ENCODE measurements at regions of chr17 and their contacts with region 1.

Region 1: DNA sequence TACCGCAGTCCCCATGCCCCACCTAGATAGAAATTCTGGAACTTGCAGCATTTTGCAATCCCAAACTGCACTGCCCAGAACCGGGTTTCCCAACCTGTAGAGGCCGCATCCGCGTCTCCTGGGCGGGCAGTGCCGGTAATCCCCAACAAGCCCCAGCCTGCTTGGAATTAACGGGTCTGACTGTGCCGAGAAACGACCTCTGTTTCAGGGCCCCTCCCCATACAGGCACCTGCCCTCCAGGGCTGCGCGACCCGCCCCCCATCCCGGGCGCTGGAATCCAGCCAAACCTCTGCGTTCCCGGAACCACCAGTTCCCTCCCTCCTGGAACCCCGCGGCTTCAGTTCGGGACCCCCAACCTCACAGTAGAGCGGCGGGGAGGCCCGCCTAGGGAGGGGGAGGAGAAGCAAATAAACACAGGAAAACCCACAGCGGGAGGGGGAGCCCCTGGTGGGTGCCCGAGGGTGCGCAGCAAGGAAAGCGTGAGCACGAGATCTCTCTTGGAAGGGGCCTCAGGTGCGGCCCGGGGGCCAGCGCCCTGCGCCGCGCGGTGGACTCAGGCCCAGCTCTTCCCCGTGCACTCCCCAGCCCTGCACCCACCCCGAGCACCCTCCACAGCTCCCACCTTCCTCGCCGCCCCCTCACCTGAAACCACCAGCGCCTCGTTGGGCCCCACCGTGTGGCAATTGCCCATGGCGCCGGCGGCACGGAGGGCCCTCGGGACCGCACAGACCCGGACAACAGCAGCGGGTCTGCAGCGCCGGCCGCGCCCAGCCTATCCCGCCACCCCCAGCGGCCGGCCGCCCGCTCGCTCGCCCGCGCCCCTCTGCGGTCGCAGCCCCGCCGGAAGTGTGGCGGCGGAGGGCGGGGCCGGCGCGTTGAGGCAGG is at the start of gene FLOT2:
- DNase-seq: peak; percentile 36 to 55
- ATAC-seq: peak; percentile 68 to 82
- H3K4me3 ChIP-seq: peak within 1 kb of the TSS; percentile 70
- H3K27ac ChIP-seq: peak within 1 kb of the TSS; percentile 87 to 97
- H3K4me1 ChIP-seq: peaks cover 23% of the 10 kb centered on the region
- CTCF ChIP-seq: peak; percentile 38; the same call in 1 of the 3 replicates
- EP300 ChIP-seq: no peak
- POLR2A ChIP-seq: peak; percentile 78; the same call in 1 of the 2 replicates
- RAD21 ChIP-seq: no peak
- polyA plus RNA-seq, gene FLOT2: 68.8 and 78.6 TPM in 2 replicates

Region 2: GRCh38 chr17:28327031-28327607 is 570.0 kb before region 1 on chr17:
- CTCF ChIA-PET with region 1: no interaction called
- POLR2A ChIA-PET with region 1: no interaction called
- DNase-seq: no peak
- ATAC-seq: no peak
- H3K4me3 ChIP-seq: no peak overlapping the region
- H3K27ac ChIP-seq: no peak overlapping the region
- H3K4me1 ChIP-seq: peaks cover 35% of the 10 kb centered on the region
- CTCF ChIP-seq: no peak
- EP300 ChIP-seq: no peak
- POLR2A ChIP-seq: no peak
- RAD21 ChIP-seq: no peak

Region 3: DNA sequence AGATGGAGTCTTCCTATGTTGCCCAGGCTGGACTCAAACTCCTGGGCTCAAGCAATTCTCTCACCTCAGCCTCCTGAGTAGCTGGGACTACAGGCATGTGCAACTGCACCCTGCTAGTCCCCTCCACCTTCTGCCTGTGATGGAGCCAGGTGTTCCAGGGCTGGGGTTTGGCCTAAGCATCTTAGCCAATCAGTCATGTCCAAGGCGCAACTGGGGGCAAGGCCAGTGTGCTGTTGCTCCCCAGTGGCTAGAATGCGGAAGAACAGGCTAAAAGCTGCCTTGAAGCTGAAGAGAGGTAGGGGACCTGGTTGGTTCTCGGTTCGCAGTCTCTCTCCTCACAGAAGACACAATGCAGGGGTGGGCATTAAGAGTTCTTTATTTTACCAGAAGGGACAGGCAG is 18.1 kb before region 1 on chr17:
- CTCF ChIA-PET with region 1: interaction called, 22 read pairs
- POLR2A ChIA-PET with region 1: interaction called, 5 read pairs
- DNase-seq: peak; percentile 81 to 90
- ATAC-seq: peak; percentile 77 to 96
- H3K4me3 ChIP-seq: no peak overlapping the region
- H3K27ac ChIP-seq: no peak overlapping the region
- H3K4me1 ChIP-seq: no peaks in the 10 kb centered on the region
- CTCF ChIP-seq: peak; percentile 48
- EP300 ChIP-seq: no peak
- POLR2A ChIP-seq: no peak
- RAD21 ChIP-seq: peak; percentile 67 to 88

Region 4: DNA sequence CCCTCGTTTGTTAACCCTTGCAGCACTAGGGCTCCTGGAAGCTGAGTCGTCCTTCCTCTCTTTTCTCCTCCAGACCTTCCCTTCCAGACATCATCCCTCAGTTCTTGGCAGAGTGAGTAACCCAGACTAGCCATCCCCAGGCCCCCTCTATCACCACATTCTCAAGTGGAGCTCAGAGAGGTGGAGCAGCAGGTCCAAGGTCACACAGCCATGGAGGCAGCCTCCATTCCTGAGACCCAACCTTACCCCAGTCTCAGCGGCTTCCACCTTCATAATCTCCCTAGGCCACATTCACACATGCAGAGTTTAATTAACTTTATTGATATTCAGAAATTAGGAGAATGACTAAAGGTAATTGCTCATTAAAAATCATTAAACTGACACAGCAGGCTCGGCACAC is 105.7 kb after region 1 on chr17:
- CTCF ChIA-PET with region 1: no interaction called
- POLR2A ChIA-PET with region 1: no interaction called
- DNase-seq: no peak
- ATAC-seq: no peak
- H3K4me3 ChIP-seq: no peak overlapping the region
- H3K27ac ChIP-seq: no peak overlapping the region
- H3K4me1 ChIP-seq: peaks cover 22% of the 10 kb centered on the region
- CTCF ChIP-seq: no peak
- EP300 ChIP-seq: no peak
- POLR2A ChIP-seq: no peak
- RAD21 ChIP-seq: no peak

Measured in A549 (cell line).